GM12878 (cell line): ENCODE measurements at regions of chr16 and their contacts with region 1.

Region 1: DNA sequence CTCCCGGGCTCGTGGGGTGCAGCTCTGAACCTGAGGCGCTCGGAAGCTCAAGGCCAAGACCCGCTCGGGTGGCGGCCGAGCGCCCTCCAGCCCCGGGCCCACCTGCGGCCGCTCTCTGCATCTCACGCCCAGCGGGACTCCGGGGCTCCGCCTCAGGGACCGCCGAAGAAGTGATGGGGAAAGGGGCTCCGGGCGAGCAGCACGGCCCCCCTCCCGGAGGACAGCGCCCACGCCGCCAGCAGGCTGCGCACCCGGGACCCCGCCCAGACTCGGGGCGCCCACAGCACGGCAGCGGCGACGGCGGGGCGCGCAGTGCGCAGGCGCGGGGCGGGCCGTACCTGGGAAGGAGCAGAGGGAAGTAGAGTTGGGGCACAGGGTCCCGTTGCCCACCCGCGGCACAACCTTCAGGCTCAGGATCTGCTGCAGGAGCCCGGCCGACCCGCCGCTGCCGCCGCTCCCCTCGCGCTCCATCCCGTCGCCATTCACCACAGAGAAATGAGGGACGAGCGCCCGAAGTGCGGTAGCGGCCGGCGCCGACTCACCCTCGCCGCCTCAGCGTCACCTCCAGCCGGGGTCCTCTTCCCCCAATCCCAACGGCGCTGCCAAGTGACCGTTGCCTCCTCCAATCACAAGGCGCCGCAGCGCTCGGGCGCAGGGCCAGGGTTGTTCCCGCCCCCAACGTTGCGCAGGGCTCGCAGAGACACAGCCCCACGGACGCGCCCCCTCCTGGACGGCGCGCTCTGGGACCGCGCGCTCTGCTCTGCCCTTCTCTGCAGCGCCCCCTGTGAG is at the start of gene TMEM170A:
- DNase-seq: peak; percentile 94
- ATAC-seq: peak; percentile 96
- H3K4me3 ChIP-seq: peak within 1 kb of the TSS; percentile 89
- H3K27ac ChIP-seq: peak within 1 kb of the TSS; percentile 85
- H3K4me1 ChIP-seq: peaks cover 6% of the 10 kb centered on the region
- H3K27me3 ChIP-seq: no peaks in the 10 kb centered on the region
- CTCF ChIP-seq: peak; percentile 100; a peak in 5 of 6 replicates
- EP300 ChIP-seq: no peak
- POLR2A ChIP-seq: peak; percentile 96
- RAD21 ChIP-seq: peak; percentile 67
- polyA plus RNA-seq, gene TMEM170A: 7.3 to 7.8 TPM

Region 2: DNA sequence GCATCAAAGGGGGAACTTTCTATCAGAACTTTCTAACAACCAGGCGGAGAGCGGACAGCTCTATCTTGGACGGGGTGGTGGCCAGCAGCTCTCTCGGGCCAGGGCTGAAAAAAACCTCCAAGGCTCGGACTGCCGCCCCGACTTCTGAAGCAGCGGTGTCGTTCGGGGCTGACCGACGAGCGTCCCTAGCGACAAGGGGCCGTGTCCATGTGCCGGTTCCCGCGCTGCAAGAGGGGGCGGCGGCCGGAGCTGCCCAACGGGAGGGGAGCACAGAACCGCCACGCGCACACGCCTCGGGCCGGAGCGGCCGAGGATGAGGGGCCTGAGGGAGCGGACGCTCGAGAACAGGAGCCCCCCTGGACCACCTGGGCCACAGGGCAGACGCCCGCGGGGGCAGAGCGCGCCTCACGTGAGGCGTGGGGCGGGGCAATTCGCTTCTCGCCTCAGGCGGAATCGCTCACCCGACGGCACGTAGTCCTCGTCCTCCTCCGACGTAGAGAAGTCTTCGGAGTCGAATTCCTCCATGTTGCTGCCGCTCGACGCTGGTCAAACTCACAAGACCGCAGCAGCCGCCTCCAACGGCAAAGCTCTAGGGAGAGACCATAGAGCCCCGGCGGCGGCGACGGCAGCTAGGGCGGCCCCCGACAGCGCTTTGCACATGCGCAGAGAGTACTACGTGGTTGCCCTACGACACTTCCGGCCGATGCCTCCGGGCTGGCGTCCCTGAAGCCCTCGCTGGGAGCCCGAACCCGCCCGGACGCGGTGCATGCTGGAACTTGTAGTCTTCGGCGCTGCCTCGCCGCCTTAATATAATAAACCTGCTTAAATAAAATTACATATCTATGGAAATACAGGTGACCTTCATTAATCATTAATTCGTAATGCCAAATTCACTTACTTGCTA is 31.2 kb before region 1 on chr16 and contains the start of gene CFDP1:
- CTCF ChIA-PET with region 1: interaction called, 34 read pairs
- POLR2A ChIA-PET with region 1: interaction called, 9 read pairs
- RAD21 ChIA-PET with region 1: no interaction called
- SMC1A ChIA-PET with region 1: interaction called, 7 read pairs
- in situ Hi-C with region 1: no loop called
- intact Hi-C with region 1: loop called (anchors 1 kb)
- DNase-seq: peak; percentile 80
- ATAC-seq: peak; percentile 93
- H3K4me3 ChIP-seq: peak within 1 kb of the TSS; percentile 89
- H3K27ac ChIP-seq: peak within 1 kb of the TSS; percentile 71
- H3K4me1 ChIP-seq: no peaks in the 10 kb centered on the region; the same call in 1 of the 2 replicates
- H3K27me3 ChIP-seq: no peaks in the 10 kb centered on the region
- CTCF ChIP-seq: no peak
- EP300 ChIP-seq: no peak
- POLR2A ChIP-seq: peak; percentile 78
- RAD21 ChIP-seq: no peak
- polyA plus RNA-seq, gene CFDP1: 36.6 to 60.8 TPM

Region 3: GRCh38 chr16:75519881-75520280 is 55.6 kb after region 1 on chr16:
- CTCF ChIA-PET with region 1: interaction called, 95 read pairs
- POLR2A ChIA-PET with region 1: interaction called, 5 read pairs
- RAD21 ChIA-PET with region 1: interaction called, 12 read pairs
- SMC1A ChIA-PET with region 1: interaction called, 6 read pairs
- in situ Hi-C with region 1: no loop called
- intact Hi-C with region 1: no loop called
- DNase-seq: no peak
- ATAC-seq: no peak
- H3K4me3 ChIP-seq: no peak overlapping the region
- H3K27ac ChIP-seq: no peak overlapping the region
- H3K4me1 ChIP-seq: no peaks in the 10 kb centered on the region
- H3K27me3 ChIP-seq: no peaks in the 10 kb centered on the region
- CTCF ChIP-seq: no peak
- EP300 ChIP-seq: no peak
- POLR2A ChIP-seq: no peak
- RAD21 ChIP-seq: no peak

Region 4: GRCh38 chr16:75647492-75648264 is 183.4 kb after region 1 on chr16 and contains the starts of genes KARS1 and TERF2IP:
- CTCF ChIA-PET with region 1: interaction called, 4 read pairs
- POLR2A ChIA-PET with region 1: no interaction called
- RAD21 ChIA-PET with region 1: interaction called, 3 read pairs
- SMC1A ChIA-PET with region 1: interaction called, 3 read pairs
- in situ Hi-C with region 1: no loop called
- intact Hi-C with region 1: loop called (anchors 2 kb)
- DNase-seq: peak; percentile 85
- ATAC-seq: peak; percentile 91
- H3K4me3 ChIP-seq: peak within 1 kb of the TSS; percentile 85
- H3K27ac ChIP-seq: peak within 1 kb of the TSS; percentile 86
- H3K4me1 ChIP-seq: peaks cover 25% of the 10 kb centered on the region
- H3K27me3 ChIP-seq: no peaks in the 10 kb centered on the region; a peak in 1 of 4 replicates
- CTCF ChIP-seq: no peak
- EP300 ChIP-seq: no peak
- POLR2A ChIP-seq: peak; percentile 98
- RAD21 ChIP-seq: no peak
- polyA plus RNA-seq, gene KARS1: 187 to 207 TPM
- polyA plus RNA-seq, gene TERF2IP: 19.6 to 40.6 TPM

Region 5: DNA sequence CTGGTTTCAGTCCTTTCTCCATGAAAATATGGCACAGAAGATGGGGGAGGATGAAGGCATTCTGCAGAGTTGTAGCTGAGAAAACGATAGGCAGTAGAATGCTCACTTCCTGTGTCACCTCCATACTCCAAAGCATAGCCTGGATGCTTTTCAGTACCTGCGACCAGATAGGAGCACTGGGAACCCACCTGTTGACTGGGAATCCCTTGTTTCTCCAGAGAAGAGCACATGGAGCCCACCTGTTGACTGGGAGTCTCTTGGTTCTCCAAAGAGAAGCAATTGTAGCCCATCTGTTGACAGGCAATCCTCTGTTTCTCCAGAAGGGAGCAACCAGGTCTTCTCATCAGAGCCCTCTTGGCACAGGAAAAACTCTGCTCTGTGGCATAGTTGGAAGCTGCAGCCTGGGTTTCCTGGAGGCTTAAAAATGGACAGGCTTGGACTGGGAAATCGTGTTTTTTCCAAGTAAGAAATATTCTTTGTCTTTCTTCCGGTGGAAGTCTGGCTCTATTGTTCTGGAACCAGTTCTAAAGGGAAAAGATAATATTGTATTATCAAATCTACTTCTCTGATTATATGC is 196.5 kb after region 1 on chr16:
- CTCF ChIA-PET with region 1: no interaction called
- POLR2A ChIA-PET with region 1: no interaction called
- RAD21 ChIA-PET with region 1: no interaction called
- SMC1A ChIA-PET with region 1: no interaction called
- in situ Hi-C with region 1: no loop called
- intact Hi-C with region 1: no loop called
- DNase-seq: no peak
- ATAC-seq: no peak
- H3K4me3 ChIP-seq: no peak overlapping the region
- H3K27ac ChIP-seq: no peak overlapping the region
- H3K4me1 ChIP-seq: no peaks in the 10 kb centered on the region
- H3K27me3 ChIP-seq: no peaks in the 10 kb centered on the region
- CTCF ChIP-seq: no peak
- EP300 ChIP-seq: no peak
- POLR2A ChIP-seq: no peak
- RAD21 ChIP-seq: no peak